ENCODE measurements at regions of chr6 and their contacts with region 1.

Region 1: GRCh38 chr6:2952557-2953095 is 18.7 kb downstream of the SERPINB6 start:
- DNase-seq: peak; percentile 92
- H3K4me3 ChIP-seq: no peak overlapping the region
- H3K27ac ChIP-seq: no peak overlapping the region
- H3K4me1 ChIP-seq: peaks cover 3% of the 10 kb centered on the region
- H3K27me3 ChIP-seq: no peaks in the 10 kb centered on the region
- CTCF ChIP-seq: peak; percentile 91 to 99
- POLR2A ChIP-seq: no peak

Region 2: DNA sequence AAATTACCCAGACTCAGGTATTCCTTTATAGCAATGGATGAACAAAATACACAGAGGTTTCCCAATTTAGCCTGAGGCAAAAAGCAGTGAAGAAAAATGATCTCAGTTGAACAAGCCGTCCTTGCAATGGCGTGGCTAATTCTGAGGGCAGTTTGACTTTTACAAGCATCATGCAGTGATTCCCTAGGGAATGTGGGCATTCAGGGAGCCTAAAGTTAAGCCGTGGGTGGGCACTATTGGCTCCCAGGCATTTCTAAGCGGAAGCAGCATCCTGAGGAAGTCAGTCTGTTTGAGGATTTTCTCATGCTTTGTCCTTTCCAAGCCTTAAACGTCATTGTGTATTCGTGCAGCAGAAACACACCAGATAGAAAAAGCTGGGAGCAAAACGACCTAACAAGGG is 335.8 kb before region 1 on chr6:
- CTCF ChIA-PET with region 1: no interaction called
- POLR2A ChIA-PET with region 1: no interaction called
- dilution Hi-C with region 1: no loop called
- intact Hi-C with region 1: no loop called
- DNase-seq: no peak
- H3K4me3 ChIP-seq: no peak overlapping the region
- H3K27ac ChIP-seq: no peak overlapping the region
- H3K4me1 ChIP-seq: peaks cover 8% of the 10 kb centered on the region
- H3K27me3 ChIP-seq: no peaks in the 10 kb centered on the region
- CTCF ChIP-seq: no peak
- POLR2A ChIP-seq: no peak

Region 3: DNA sequence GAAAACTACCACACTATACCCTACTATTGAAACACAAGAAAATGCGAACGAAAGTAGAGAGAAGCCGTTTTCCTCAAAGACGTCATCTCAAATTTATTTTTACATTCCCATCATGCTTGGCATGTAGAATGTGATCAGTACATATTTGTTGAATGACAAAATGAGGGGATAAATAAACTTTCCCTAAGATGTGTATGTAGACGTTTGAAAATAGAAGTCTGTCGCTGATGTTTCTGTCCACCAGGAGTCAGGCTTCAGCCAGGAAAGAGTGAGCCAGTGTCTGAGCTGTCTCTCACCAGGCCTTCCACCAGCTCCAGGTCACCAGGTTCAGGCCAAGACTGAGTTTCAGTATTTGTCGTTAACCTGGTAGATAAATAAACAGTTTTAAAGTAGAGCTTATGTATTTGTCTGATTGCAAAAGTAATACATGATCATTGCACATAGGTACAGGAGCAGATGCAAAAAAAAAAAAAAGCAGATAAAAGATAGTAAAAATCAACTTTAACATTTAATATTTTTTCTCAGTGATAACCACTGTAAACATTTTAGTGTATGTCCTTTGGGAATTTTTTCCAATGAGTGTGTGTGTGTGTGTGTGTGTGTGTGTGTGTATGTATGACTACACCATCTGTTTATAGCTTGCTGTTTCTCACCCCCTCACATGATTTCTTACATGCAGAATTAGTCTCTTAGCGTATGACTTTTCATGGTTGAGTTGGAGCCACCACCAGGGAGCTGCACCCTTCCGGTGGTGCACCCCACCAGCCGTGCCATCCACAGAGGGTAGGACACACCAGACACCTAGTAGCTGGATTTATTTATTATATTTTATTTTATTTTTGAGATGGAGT is 161.3 kb before region 1 on chr6:
- CTCF ChIA-PET with region 1: interaction called, 25 read pairs
- POLR2A ChIA-PET with region 1: no interaction called
- dilution Hi-C with region 1: no loop called
- intact Hi-C with region 1: no loop called
- DNase-seq: peak; percentile 92
- H3K4me3 ChIP-seq: no peak overlapping the region
- H3K27ac ChIP-seq: peak overlapping the region; percentile 25
- H3K4me1 ChIP-seq: peaks cover 5% of the 10 kb centered on the region
- H3K27me3 ChIP-seq: no peaks in the 10 kb centered on the region
- CTCF ChIP-seq: peak; percentile 71 to 79
- POLR2A ChIP-seq: no peak

Region 4: DNA sequence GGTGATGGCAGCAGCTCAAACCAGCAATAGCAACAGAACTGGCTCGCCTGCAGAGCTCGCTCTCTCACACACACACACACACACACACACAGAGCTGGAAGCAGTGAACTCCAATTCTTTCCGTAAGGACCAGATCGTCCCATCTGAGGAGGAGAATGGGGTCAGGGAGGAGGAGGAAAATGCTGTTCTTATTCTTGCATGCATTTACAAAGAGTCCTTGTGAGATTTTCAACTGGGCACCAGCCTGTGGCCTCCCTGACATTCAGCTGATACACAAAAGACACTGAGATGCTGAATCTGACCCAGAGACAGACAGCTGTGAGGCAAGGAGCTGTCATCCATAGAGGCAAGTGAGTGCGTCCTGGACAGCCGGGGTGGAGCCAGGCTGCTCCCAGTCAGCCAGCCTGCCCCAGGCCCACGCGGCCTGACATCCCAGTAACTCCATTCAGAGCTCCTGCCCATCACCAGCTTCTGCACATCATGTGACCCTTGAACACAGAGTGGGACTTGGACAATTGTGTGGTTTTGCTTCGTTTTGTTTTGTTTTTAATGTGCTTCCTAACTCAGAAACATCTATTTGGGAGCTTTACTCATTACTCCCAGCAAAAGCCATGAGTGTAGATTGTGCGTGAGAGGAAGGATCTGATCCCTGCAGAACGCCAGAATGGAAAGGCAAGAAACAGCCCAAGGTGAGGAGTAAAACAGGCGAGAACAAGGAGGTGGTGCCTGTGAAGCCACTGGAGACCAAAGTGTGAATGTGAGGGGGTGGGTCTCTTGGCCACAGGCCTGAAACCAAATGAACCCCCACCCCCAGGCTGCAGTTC is 51.6 kb before region 1 on chr6:
- CTCF ChIA-PET with region 1: interaction called, 10 read pairs
- POLR2A ChIA-PET with region 1: interaction called, 3 read pairs
- dilution Hi-C with region 1: no loop called
- intact Hi-C with region 1: no loop called
- DNase-seq: peak; percentile 41
- H3K4me3 ChIP-seq: peak overlapping the region; percentile 22 to 91 (median 66)
- H3K27ac ChIP-seq: no peak overlapping the region
- H3K4me1 ChIP-seq: peaks cover 15% of the 10 kb centered on the region
- H3K27me3 ChIP-seq: no peaks in the 10 kb centered on the region
- CTCF ChIP-seq: no peak
- POLR2A ChIP-seq: no peak

Region 5: GRCh38 chr6:2940010-2940850 is 12.4 kb before region 1 on chr6:
- CTCF ChIA-PET with region 1: interaction called, 59 read pairs
- POLR2A ChIA-PET with region 1: no interaction called
- dilution Hi-C with region 1: no loop called
- intact Hi-C with region 1: no loop called
- DNase-seq: no peak
- H3K4me3 ChIP-seq: no peak overlapping the region
- H3K27ac ChIP-seq: no peak overlapping the region
- H3K4me1 ChIP-seq: peaks cover 20% of the 10 kb centered on the region
- H3K27me3 ChIP-seq: no peaks in the 10 kb centered on the region
- CTCF ChIP-seq: no peak
- POLR2A ChIP-seq: no peak

Region 6: GRCh38 chr6:2976571-2977085 is 24.0 kb after region 1 on chr6:
- CTCF ChIA-PET with region 1: interaction called, 48 read pairs
- POLR2A ChIA-PET with region 1: no interaction called
- dilution Hi-C with region 1: no loop called
- intact Hi-C with region 1: no loop called
- DNase-seq: peak; percentile 71
- H3K4me3 ChIP-seq: no peak overlapping the region
- H3K27ac ChIP-seq: peak overlapping the region; percentile 21
- H3K4me1 ChIP-seq: peaks cover 27% of the 10 kb centered on the region
- H3K27me3 ChIP-seq: no peaks in the 10 kb centered on the region
- CTCF ChIP-seq: no peak
- POLR2A ChIP-seq: no peak

Region 7: DNA sequence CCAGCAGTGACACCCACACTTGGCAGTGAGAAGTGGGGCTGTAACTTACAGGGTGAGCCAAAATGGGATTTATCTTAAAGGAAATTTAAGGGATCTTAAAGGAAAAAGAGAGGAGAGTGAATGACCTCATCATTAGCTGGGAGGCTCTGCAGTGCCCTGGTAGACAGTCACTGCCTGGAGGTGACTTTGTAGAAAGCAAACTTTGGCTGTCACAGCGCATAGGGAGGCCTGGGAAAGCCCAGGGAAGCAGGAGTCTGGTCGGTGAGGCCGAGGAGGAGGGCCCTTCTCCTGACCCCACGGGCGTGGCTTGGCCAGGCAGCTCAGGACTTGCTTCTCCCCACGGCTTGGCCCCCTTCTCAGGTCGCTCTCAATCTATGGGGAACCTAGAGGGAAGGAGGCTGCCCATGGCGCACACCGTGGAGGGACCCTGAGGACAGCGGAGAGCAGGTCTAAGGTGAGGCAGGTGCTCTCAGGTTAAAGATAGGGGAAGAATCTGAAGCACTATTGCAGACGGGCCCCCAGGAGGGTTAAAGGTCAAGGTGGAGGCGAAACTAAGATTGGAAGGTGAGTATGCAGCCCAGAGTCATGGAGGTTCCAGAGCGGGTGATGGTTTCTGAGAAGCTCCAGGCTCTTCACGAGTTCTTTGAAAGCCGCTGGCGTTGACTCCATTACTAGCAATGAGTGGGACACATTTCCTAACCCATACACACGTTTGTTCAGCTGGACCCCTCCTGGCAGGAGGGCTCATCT is 100.0 kb after region 1 on chr6:
- CTCF ChIA-PET with region 1: interaction called, 8 read pairs
- POLR2A ChIA-PET with region 1: no interaction called
- dilution Hi-C with region 1: no loop called
- intact Hi-C with region 1: loop called (anchors 1 kb)
- DNase-seq: no peak
- H3K4me3 ChIP-seq: no peak overlapping the region
- H3K27ac ChIP-seq: no peak overlapping the region
- H3K4me1 ChIP-seq: peaks cover 9% of the 10 kb centered on the region
- H3K27me3 ChIP-seq: peaks cover 3 to 8% of the 10 kb centered on the region in 2 experiments
- CTCF ChIP-seq: no peak
- POLR2A ChIP-seq: no peak

Measured in endothelial cell of umbilical vein (primary cell).